ENCODE measurements at regions of chrX and their contacts with region 1.

Region 1: DNA sequence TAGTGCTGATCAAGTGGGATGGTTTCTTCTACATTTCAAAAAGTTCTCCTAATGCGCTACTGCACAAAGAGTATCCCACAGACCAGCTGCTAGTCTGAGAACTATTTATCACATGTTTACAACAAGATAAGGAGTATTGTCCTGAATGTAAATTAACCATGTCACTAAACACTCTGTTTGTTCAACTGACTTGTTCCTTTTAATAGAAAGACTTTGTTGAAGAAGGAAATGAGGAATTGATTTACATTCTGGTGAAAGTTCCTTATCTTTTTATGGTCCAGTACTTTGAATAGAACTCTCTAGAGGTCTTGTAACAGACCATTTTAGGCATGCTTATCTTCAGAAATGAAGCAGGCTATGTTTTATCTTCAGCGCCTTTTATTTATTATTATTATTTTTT is 67.3 kb upstream of the IL13RA1 start:
- DNase-seq: no peak
- ATAC-seq: no peak
- H3K4me3 ChIP-seq: no peak overlapping the region
- H3K4me3 Mint-ChIP-seq: no peak overlapping the region
- H3K27ac ChIP-seq: no peak overlapping the region
- H3K27ac Mint-ChIP-seq: no peak overlapping the region
- H3K4me1 ChIP-seq: no peaks in the 10 kb centered on the region
- H3K4me1 Mint-ChIP-seq: no peaks in the 10 kb centered on the region
- H3K27me3 ChIP-seq: no peaks in the 10 kb centered on the region
- H3K27me3 Mint-ChIP-seq: no peaks in the 10 kb centered on the region
- CTCF ChIP-seq: no peak

Region 2: DNA sequence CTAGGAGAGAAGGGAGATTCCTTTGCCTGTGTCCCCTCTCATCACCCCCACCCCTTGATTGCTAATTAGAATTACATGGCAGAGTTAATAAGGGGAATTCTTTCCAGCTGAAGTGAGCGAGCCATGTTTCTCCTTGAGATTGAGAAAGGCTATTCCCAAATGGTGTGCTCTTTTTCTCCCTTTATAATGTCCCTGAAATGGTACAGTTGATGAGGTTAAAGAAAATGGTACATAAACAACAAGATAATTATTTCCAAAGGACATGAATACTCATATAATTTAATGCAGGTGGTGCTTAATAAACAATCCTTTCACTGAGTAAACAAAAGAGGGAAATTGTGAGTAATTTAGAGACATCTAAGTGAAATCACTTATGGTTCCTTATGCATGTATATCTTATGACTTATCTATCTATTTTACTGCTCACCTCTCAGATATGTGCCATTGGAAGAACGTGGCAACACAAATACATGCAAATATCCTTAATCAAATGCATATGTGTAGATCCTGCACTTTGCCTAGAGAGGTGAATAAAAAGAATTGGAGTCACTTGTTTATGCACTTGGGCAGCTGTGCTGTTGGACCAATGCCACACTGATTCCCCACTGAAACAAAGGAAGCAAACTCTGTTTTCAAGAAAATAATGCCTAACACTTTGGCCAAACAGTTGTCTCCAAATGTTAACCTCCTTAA is 420.8 kb before region 1 on chrX:
- CTCF ChIA-PET with region 1: no interaction called
- POLR2A ChIA-PET with region 1: no interaction called
- intact Hi-C with region 1: no loop called
- DNase-seq: no peak
- ATAC-seq: no peak
- H3K4me3 ChIP-seq: no peak overlapping the region
- H3K4me3 Mint-ChIP-seq: no peak overlapping the region
- H3K27ac ChIP-seq: no peak overlapping the region
- H3K27ac Mint-ChIP-seq: no peak overlapping the region
- H3K4me1 ChIP-seq: no peaks in the 10 kb centered on the region
- H3K4me1 Mint-ChIP-seq: no peaks in the 10 kb centered on the region
- H3K27me3 ChIP-seq: no peaks in the 10 kb centered on the region
- H3K27me3 Mint-ChIP-seq: peaks cover 5% of the 10 kb centered on the region
- CTCF ChIP-seq: no peak

Region 3: DNA sequence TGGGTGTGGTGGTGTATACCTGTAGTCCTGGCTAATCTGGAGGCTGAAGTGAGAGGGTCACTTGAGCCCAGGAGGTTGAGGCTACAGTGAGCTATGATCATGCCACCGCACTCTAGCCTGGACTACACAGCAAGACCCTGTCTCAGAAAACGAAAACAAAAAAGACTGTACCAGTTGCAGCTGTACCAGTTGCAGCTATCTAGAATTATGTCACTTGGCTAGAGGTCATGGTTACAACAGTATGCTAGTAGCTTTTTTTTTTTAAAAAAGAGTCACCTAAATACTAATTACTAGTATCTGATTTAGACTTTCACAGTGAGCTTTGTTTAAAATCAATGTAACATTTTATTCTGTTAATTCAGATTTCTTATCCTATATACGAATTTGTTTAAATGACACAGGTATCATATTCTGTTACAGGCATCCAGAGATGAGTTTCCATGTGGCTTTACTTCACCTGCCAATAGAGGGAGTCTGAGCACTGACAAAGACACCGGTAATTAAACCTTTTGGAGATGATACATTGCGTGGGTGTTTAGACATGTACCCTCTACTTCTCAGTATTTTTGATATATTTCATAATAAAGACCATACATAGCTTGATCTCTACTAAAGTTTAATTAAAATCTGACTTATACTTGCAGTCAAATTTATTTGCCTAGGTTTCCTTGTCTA is 32.9 kb before region 1 on chrX:
- CTCF ChIA-PET with region 1: no interaction called
- POLR2A ChIA-PET with region 1: no interaction called
- intact Hi-C with region 1: loop called in 1 of 2 experiments (anchors 5 kb)
- DNase-seq: no peak
- ATAC-seq: no peak
- H3K4me3 ChIP-seq: no peak overlapping the region
- H3K4me3 Mint-ChIP-seq: no peak overlapping the region
- H3K27ac ChIP-seq: no peak overlapping the region
- H3K27ac Mint-ChIP-seq: peak overlapping the region; percentile 27
- H3K4me1 ChIP-seq: no peaks in the 10 kb centered on the region
- H3K4me1 Mint-ChIP-seq: no peaks in the 10 kb centered on the region
- H3K27me3 ChIP-seq: no peaks in the 10 kb centered on the region
- H3K27me3 Mint-ChIP-seq: no peaks in the 10 kb centered on the region
- CTCF ChIP-seq: no peak